PC-3 (cell line): ENCODE measurements at regions of chr1 and their contacts with region 1.

Region 1: GRCh38 chr1:1906185-1907097 is 8.6 kb upstream of the CALML6 start:
- DNase-seq: peak; percentile 90
- ATAC-seq: peak; percentile 76
- H3K4me3 ChIP-seq: no peak overlapping the region
- H3K27ac ChIP-seq: no peak overlapping the region
- H3K4me1 ChIP-seq: peaks cover 15% of the 10 kb centered on the region
- H3K27me3 ChIP-seq: no peaks in the 10 kb centered on the region
- CTCF ChIP-seq: peak; percentile 99

Region 2: GRCh38 chr1:1273512-1274298 is 632.7 kb before region 1 on chr1 and contains the start of gene UBE2J2:
- CTCF ChIA-PET with region 1: no interaction called
- POLR2A ChIA-PET with region 1: no interaction called
- intact Hi-C with region 1: no loop called
- DNase-seq: peak; percentile 91
- ATAC-seq: peak; percentile 80
- H3K4me3 ChIP-seq: peak within 1 kb of the TSS; percentile 96
- H3K27ac ChIP-seq: peak within 1 kb of the TSS; percentile 90
- H3K4me1 ChIP-seq: peaks cover 29% of the 10 kb centered on the region
- H3K27me3 ChIP-seq: no peaks in the 10 kb centered on the region
- CTCF ChIP-seq: no peak
- total RNA-seq, gene UBE2J2: 182 and 200 TPM in 2 replicates

Region 3: GRCh38 chr1:1758692-1759455 is 147.6 kb before region 1 on chr1:
- CTCF ChIA-PET with region 1: interaction called, 9 read pairs
- POLR2A ChIA-PET with region 1: interaction called, 8 read pairs
- intact Hi-C with region 1: loop called (anchors 5 kb)
- DNase-seq: peak; percentile 99
- ATAC-seq: peak; percentile 80
- H3K4me3 ChIP-seq: peak overlapping the region; percentile 17; the same call in 1 of the 2 replicates
- H3K27ac ChIP-seq: peak overlapping the region; percentile 78
- H3K4me1 ChIP-seq: peaks cover 40% of the 10 kb centered on the region
- H3K27me3 ChIP-seq: no peaks in the 10 kb centered on the region
- CTCF ChIP-seq: no peak

Region 4: DNA sequence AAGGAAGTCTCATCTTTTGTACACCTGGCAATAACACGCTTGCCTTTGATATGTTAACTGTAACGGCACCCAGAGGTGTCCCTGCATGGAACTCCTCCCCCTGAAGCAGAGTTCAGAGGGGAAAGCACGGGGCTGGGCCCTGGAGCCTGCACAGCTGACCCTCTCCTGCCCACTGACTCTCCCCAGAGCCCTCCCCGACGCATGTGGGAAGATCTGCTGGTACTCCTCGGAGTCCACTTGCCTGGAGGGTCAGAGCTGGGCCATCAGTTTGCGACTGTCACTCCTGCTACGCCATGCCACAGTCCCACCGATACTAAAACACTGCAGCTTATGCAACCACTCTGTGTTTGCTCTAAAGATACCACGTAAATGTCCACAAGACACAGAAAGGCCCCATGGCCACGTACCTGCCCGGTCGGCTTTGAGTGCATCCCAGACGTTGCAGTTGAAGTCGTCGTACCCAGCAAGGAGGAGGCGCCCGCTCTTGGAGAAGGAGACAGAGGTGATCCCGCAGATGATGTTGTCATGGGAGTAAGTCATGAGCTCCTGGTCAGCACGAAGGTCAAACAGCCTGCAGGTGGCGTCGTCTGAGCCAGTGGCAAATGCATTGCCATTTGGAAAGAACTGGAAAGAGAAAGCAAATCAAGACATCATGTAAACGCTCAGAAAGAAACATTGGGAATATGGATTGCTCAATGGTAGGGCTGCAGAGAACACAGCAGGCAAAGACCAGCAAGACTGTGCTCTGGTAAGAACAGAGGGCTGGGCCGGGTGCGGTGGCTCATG is 117.6 kb before region 1 on chr1:
- CTCF ChIA-PET with region 1: interaction called, 5 read pairs
- POLR2A ChIA-PET with region 1: interaction called, 4 read pairs
- intact Hi-C with region 1: loop called (anchors 1 kb)
- DNase-seq: peak; percentile 53
- ATAC-seq: peak; percentile 53
- H3K4me3 ChIP-seq: no peak overlapping the region
- H3K27ac ChIP-seq: no peak overlapping the region
- H3K4me1 ChIP-seq: no peaks in the 10 kb centered on the region
- H3K27me3 ChIP-seq: no peaks in the 10 kb centered on the region
- CTCF ChIP-seq: peak; percentile 84

Region 5: DNA sequence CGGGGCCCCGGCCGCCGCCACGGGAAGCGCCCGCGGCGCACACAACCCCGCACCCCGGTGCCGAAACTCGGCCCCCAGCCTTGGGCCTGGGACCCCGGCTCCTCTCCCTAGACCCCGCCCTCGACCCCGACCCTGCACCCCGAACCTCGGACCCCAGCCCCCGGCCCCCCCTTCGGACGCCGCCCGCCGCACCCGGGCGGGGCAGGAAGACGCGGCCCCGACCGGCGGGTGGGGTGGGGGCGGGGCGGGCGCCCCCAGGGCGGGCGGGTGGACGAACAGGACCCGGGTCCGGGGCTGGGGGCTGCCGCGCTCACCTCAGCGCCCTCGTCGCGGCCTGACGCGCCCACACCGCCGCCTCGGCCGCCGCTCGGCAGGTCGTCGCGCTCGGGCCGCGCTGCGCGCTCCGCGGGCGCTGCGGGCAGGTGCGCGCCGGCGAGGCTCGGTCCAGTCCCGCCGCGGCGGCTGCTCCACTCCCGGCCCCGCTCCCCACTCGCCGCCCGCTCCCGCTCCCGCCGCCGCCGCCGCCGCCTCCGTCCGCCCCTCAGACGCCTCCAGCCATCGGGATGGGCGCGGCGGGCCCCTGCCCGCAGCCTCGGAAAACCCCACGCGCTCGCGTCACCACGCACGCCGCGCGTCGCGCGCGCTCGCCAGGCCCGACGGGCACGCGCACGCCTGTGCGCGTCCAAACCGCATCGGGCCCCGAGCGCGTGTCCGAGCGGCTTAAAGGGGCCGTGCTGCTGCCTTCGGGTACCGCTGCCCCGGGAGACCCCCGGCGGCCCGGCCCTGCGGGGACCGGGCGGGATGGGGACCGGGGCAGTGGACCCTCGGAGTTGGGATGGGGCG is 15.7 kb before region 1 on chr1 and contains the start of gene GNB1:
- CTCF ChIA-PET with region 1: interaction called, 6 read pairs
- POLR2A ChIA-PET with region 1: interaction called, 3 read pairs
- intact Hi-C with region 1: loop called (anchors 2 kb)
- DNase-seq: peak; percentile 99
- ATAC-seq: peak; percentile 57
- H3K4me3 ChIP-seq: peak within 1 kb of the TSS; percentile 93
- H3K27ac ChIP-seq: peak within 1 kb of the TSS; percentile 33
- H3K4me1 ChIP-seq: peaks cover 45% of the 10 kb centered on the region
- H3K27me3 ChIP-seq: no peaks in the 10 kb centered on the region
- CTCF ChIP-seq: no peak
- total RNA-seq, gene GNB1: 125 and 171 TPM in 2 replicates

Region 6: GRCh38 chr1:2044510-2045319 is 138.3 kb after region 1 on chr1:
- CTCF ChIA-PET with region 1: interaction called, 15 read pairs
- POLR2A ChIA-PET with region 1: no interaction called
- intact Hi-C with region 1: no loop called
- DNase-seq: peak; percentile 85
- ATAC-seq: peak; percentile 54
- H3K4me3 ChIP-seq: peak overlapping the region; percentile 53
- H3K27ac ChIP-seq: no peak overlapping the region
- H3K4me1 ChIP-seq: peaks cover 18% of the 10 kb centered on the region
- H3K27me3 ChIP-seq: no peaks in the 10 kb centered on the region
- CTCF ChIP-seq: peak; percentile 80

Region 7: DNA sequence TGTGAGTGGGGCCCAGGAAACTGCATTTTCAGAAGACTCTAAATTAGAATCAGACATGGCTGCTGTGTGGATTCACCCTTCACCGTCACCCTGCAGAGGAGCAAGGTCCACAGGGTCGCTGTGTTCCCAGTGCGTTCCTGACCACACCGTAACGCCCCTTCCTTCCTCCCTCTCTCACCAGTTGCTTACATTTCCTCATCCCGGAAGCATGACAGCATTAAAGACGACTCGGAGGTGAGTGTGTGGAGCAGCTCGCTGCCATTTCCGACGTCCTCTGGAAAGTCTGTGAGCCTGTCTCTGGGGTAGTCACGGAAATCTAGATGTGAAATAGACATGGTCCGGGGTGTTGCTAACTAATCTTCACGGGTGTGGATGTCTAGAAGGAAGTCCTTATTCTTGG is 242.2 kb after region 1 on chr1:
- CTCF ChIA-PET with region 1: no interaction called
- POLR2A ChIA-PET with region 1: no interaction called
- intact Hi-C with region 1: no loop called
- DNase-seq: no peak
- ATAC-seq: no peak
- H3K4me3 ChIP-seq: no peak overlapping the region
- H3K27ac ChIP-seq: no peak overlapping the region
- H3K4me1 ChIP-seq: no peaks in the 10 kb centered on the region
- H3K27me3 ChIP-seq: no peaks in the 10 kb centered on the region
- CTCF ChIP-seq: no peak